ENCODE measurements at regions of chr5 and their contacts with region 1.

Region 1: DNA sequence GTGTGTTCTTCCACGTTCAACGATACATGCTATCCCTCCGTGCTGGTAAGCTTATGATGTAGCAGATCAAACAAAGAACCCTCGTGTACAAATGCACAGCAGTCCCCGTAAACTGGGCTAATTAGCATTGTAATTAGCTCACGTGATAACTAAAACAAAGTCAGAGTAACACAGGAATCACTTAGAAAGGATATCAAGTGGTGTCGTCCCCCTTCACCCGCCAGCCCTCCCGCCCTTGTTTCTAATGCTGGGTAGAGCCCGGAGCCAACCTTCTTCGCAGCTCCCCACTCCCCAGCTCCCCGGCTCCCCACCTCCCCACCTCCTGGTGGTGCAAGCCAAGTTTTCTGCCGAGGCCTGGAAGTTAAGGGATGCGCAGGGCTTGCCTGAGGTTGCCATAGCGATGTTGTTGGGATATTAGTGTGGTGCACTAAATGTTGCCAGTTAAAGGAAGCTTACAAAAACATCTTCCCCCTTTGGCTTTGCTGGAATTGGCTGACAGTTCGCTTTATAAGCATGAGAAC is 357.9 kb upstream of the CCNH start:
- DNase-seq: no peak
- ATAC-seq: no peak
- H3K4me3 ChIP-seq: no peak overlapping the region
- H3K4me3 Mint-ChIP-seq: no peak overlapping the region
- H3K27ac ChIP-seq: no peak overlapping the region
- H3K27ac Mint-ChIP-seq: no peak overlapping the region
- H3K4me1 ChIP-seq: no peaks in the 10 kb centered on the region
- H3K4me1 Mint-ChIP-seq: no peaks in the 10 kb centered on the region
- H3K27me3 ChIP-seq: peaks cover 0 to 7% (median 0%) of the 10 kb centered on the region in 4 experiments
- H3K27me3 Mint-ChIP-seq: peaks cover 35% of the 10 kb centered on the region
- CTCF ChIP-seq: no peak

Region 2: GRCh38 chr5:85998656-85999055 is 1772.0 kb before region 1 on chr5:
- CTCF ChIA-PET with region 1: no interaction called
- POLR2A ChIA-PET with region 1: no interaction called
- intact Hi-C with region 1: no loop called
- DNase-seq: no peak
- ATAC-seq: no peak
- H3K4me3 ChIP-seq: no peak overlapping the region
- H3K4me3 Mint-ChIP-seq: no peak overlapping the region
- H3K27ac ChIP-seq: no peak overlapping the region
- H3K27ac Mint-ChIP-seq: no peak overlapping the region
- H3K4me1 ChIP-seq: no peaks in the 10 kb centered on the region
- H3K4me1 Mint-ChIP-seq: no peaks in the 10 kb centered on the region
- H3K27me3 ChIP-seq: no peaks in the 10 kb centered on the region
- H3K27me3 Mint-ChIP-seq: no peaks in the 10 kb centered on the region
- CTCF ChIP-seq: no peak

Region 3: GRCh38 chr5:87754009-87754757 is 16.5 kb before region 1 on chr5:
- CTCF ChIA-PET with region 1: no interaction called
- POLR2A ChIA-PET with region 1: no interaction called
- intact Hi-C with region 1: no loop called
- DNase-seq: no peak
- ATAC-seq: no peak
- H3K4me3 ChIP-seq: no peak overlapping the region
- H3K4me3 Mint-ChIP-seq: no peak overlapping the region
- H3K27ac ChIP-seq: no peak overlapping the region
- H3K27ac Mint-ChIP-seq: no peak overlapping the region
- H3K4me1 ChIP-seq: no peaks in the 10 kb centered on the region
- H3K4me1 Mint-ChIP-seq: no peaks in the 10 kb centered on the region
- H3K27me3 ChIP-seq: peaks cover 0 to 3% (median 0%) of the 10 kb centered on the region in 4 experiments
- H3K27me3 Mint-ChIP-seq: peaks cover 11% of the 10 kb centered on the region
- CTCF ChIP-seq: no peak

Region 4: GRCh38 chr5:87780831-87781760 is 10.4 kb after region 1 on chr5:
- CTCF ChIA-PET with region 1: interaction called, 21 read pairs
- POLR2A ChIA-PET with region 1: no interaction called
- intact Hi-C with region 1: no loop called
- DNase-seq: peak; percentile 82
- ATAC-seq: peak; percentile 98
- H3K4me3 ChIP-seq: no peak overlapping the region
- H3K4me3 Mint-ChIP-seq: no peak overlapping the region
- H3K27ac ChIP-seq: no peak overlapping the region
- H3K27ac Mint-ChIP-seq: no peak overlapping the region
- H3K4me1 ChIP-seq: peaks cover 0 to 3% of the 10 kb centered on the region in 2 donors
- H3K4me1 Mint-ChIP-seq: peaks cover 3% of the 10 kb centered on the region
- H3K27me3 ChIP-seq: peaks cover 0 to 11% (median 3%) of the 10 kb centered on the region in 4 experiments
- H3K27me3 Mint-ChIP-seq: peaks cover 17% of the 10 kb centered on the region
- CTCF ChIP-seq: peak; percentile 98